ENCODE measurements at regions of chr10 and their contacts with region 1.

Region 1: DNA sequence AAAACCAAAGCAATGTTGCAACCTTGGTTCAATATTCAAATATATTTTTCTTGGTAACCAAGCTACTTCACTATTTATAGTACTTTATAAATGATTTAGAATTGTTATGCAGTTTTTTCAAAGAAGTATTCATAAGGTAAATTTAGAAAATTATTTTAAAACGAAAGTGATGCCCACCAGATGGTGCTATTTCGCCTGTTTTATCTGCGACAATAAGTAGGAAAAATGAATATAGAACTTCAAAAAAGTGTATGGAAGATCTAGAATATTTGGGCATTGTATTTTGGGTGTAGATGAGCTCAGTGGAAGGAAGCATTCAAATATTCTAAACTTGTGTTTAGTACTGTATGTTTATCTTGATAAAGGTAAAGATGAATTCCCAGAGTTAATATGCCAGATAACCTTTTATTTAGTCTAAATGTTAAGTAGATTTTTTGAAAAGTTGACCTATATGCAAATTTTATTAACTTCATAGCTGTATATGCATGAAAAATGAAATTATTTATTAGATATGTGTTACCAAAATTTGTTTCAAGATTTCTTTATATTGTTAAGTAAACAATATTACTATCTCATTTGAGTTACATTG is 93.2 kb downstream of the ADK start:
- DNase-seq: peak; percentile 63
- H3K4me3 ChIP-seq: no peak overlapping the region
- H3K27ac ChIP-seq: no peak overlapping the region
- H3K4me1 ChIP-seq: no peaks in the 10 kb centered on the region
- H3K27me3 ChIP-seq: no peaks in the 10 kb centered on the region

Region 2: DNA sequence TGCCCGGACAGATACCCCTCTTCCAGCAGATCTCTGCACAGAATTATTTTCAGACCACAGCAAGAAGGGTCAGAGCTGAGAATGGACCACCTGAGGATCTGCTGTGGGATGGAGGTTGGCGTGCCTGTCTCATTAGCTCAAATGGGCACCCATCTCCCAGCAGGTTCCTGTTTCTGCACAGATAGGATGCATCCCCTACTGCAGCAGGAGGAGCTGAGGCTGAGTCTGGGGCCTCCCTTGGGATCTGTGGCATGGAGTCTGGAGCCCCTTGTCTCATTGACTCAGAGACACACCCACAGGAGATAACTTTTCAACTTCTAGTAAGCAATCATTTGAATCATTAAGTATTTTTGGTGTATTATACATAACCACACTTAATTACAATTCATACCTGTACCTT is 119.5 kb after region 1 on chr10:
- in situ Hi-C with region 1: no loop called
- DNase-seq: no peak
- H3K4me3 ChIP-seq: no peak overlapping the region
- H3K27ac ChIP-seq: no peak overlapping the region
- H3K4me1 ChIP-seq: peaks cover 27% of the 10 kb centered on the region
- H3K27me3 ChIP-seq: no peaks in the 10 kb centered on the region

Region 3: GRCh38 chr10:75099952-75100763 is 856.0 kb after region 1 on chr10:
- in situ Hi-C with region 1: loop called (anchors 10 kb)
- DNase-seq: peak; percentile 73
- H3K4me3 ChIP-seq: no peak overlapping the region
- H3K27ac ChIP-seq: no peak overlapping the region
- H3K4me1 ChIP-seq: no peaks in the 10 kb centered on the region
- H3K27me3 ChIP-seq: no peaks in the 10 kb centered on the region